AG04450 (cell line): ENCODE measurements at regions of chr9 and their contacts with region 1.

Region 1: DNA sequence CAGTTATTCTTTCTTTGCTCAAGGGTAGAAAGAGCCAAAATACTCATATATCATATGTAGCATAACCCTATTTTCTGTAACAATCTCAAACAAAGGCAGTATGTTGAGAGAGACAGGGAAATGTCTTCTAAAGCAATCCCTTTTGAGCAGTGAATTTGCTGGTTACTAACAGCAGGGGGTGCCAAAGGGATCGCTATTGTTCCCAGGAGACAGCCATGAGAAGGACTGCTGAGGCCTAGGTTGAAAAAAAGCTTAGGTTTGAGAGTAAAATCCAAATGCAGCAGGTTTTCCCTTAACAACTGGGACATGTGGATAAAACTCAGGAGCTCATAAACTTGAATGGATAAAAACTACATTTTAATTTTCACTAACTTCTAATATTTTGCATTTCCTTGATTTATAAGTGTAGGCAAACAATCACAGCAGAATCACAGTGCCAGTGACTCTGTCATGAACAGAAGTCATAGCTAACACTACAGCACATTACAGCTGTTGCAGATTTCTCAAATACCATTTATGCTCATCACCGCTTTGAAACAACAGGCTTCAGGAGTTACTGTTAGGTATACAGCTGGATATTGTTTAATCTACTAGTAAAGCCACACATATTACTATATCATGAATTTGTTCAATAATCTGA is 148.4 kb downstream of the MAPKAP1 start:
- DNase-seq: peak; percentile 48
- H3K4me3 ChIP-seq: no peak overlapping the region
- H3K27ac ChIP-seq: no peak overlapping the region
- H3K27me3 ChIP-seq: no peaks in the 10 kb centered on the region
- CTCF ChIP-seq: peak; percentile 90

Region 2: GRCh38 chr9:125407974-125408900 is 150.3 kb before region 1 on chr9:
- CTCF ChIA-PET with region 1: interaction called, 19 read pairs
- POLR2A ChIA-PET with region 1: no interaction called
- DNase-seq: peak; percentile 27
- H3K4me3 ChIP-seq: peak overlapping the region; percentile 60
- H3K27ac ChIP-seq: no peak overlapping the region
- H3K27me3 ChIP-seq: no peaks in the 10 kb centered on the region
- CTCF ChIP-seq: peak; percentile 84

Region 3: GRCh38 chr9:125544988-125545651 is 13.5 kb before region 1 on chr9:
- CTCF ChIA-PET with region 1: interaction called, 18 read pairs
- POLR2A ChIA-PET with region 1: no interaction called
- DNase-seq: peak; percentile 74
- H3K4me3 ChIP-seq: no peak overlapping the region
- H3K27ac ChIP-seq: peak overlapping the region; percentile 66
- H3K27me3 ChIP-seq: no peaks in the 10 kb centered on the region
- CTCF ChIP-seq: no peak

Region 4: GRCh38 chr9:125568621-125569020 is 10.0 kb after region 1 on chr9:
- CTCF ChIA-PET with region 1: interaction called, 40 read pairs
- POLR2A ChIA-PET with region 1: no interaction called
- DNase-seq: no peak
- H3K4me3 ChIP-seq: no peak overlapping the region
- H3K27ac ChIP-seq: no peak overlapping the region
- H3K27me3 ChIP-seq: no peaks in the 10 kb centered on the region
- CTCF ChIP-seq: no peak

Region 5: DNA sequence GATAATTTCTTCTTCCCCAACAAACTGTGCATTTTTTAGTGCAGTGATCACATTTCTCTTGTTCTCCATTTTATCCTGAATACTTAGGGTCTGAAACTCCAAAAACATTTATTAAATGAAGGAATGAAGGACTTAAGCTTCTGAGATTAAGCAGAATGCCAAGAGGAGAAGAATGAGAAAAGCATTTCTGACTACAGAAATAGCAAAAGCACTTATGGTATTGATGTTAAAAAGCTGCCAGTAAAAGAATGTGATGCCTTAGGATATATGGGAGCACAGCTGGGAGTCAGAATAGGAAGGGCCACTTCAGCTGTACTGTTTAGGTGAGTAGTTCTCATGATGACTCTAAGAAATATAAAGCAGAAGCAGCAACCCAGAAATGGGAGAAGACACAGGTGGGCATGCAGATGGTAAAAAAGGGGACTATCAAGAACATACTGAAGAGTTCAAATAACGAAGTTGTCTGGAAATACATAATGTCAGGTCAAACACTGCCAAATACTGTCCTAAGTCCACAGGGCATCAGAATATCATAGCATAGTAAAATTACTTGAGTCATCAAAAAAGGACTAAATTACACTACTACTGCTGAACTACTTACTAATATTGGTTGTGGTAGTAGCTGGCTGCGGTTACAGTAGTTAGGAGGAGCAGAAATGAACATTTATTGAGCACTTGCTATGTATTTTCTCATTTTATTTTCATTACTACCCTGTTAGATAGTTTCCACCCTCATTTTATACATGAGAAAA is 15.7 kb after region 1 on chr9:
- CTCF ChIA-PET with region 1: interaction called, 40 read pairs
- POLR2A ChIA-PET with region 1: no interaction called
- DNase-seq: no peak
- H3K4me3 ChIP-seq: no peak overlapping the region
- H3K27ac ChIP-seq: no peak overlapping the region
- H3K27me3 ChIP-seq: no peaks in the 10 kb centered on the region
- CTCF ChIP-seq: no peak

Region 6: GRCh38 chr9:125589287-125589686 is 30.7 kb after region 1 on chr9:
- CTCF ChIA-PET with region 1: interaction called, 10 read pairs
- POLR2A ChIA-PET with region 1: no interaction called
- DNase-seq: no peak
- H3K4me3 ChIP-seq: no peak overlapping the region
- H3K27ac ChIP-seq: no peak overlapping the region
- H3K27me3 ChIP-seq: no peaks in the 10 kb centered on the region
- CTCF ChIP-seq: no peak

Region 7: GRCh38 chr9:125746017-125746773 is 187.6 kb after region 1 on chr9:
- CTCF ChIA-PET with region 1: interaction called, 20 read pairs
- POLR2A ChIA-PET with region 1: no interaction called
- DNase-seq: peak; percentile 68
- H3K4me3 ChIP-seq: peak overlapping the region; percentile 74
- H3K27ac ChIP-seq: peak overlapping the region; percentile 47
- H3K27me3 ChIP-seq: no peaks in the 10 kb centered on the region
- CTCF ChIP-seq: no peak